Tibial artery (tissue), 4 donors: ENCODE measurements at regions of chr9 and their contacts with region 1.

Region 1: GRCh38 chr9:88593537-88594185 is 58.7 kb downstream of the NXNL2 start:
- DNase-seq: peak in 1 of 2 donors; percentile 54
- H3K4me3 ChIP-seq: no peak overlapping the region
- H3K27ac ChIP-seq: no peak overlapping the region
- H3K4me1 ChIP-seq: peaks cover 0 to 8% (median 0%) of the 10 kb centered on the region in 4 donors
- H3K27me3 ChIP-seq: no peaks in the 10 kb centered on the region
- CTCF ChIP-seq: peak; percentile 58 to 87

Region 2: DNA sequence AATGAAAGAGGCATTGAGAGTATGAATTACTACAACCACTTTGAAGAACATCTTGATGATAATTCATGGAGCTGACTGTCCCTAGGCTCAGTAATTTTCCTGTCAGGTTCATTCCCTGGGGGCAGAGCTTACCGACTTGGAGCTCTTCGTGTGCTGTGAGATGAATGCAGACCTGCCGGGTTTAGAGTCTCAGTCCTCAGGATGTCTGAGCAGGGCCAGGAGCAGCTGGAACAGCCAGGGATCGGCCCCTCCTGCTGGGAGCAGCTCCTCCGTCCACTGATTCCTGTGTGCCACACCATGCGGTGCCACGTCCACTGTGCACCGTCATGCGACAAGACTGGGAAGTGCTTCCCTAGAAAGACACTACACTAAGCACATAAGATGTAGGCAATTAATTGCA is 267.6 kb before region 1 on chr9:
- intact Hi-C with region 1: no loop called
- DNase-seq: no peak
- H3K4me3 ChIP-seq: no peak overlapping the region
- H3K27ac ChIP-seq: no peak overlapping the region
- H3K4me1 ChIP-seq: no peaks in the 10 kb centered on the region
- H3K27me3 ChIP-seq: peaks cover 0 to 6% of the 10 kb centered on the region in 2 donors
- CTCF ChIP-seq: no peak

Region 3: DNA sequence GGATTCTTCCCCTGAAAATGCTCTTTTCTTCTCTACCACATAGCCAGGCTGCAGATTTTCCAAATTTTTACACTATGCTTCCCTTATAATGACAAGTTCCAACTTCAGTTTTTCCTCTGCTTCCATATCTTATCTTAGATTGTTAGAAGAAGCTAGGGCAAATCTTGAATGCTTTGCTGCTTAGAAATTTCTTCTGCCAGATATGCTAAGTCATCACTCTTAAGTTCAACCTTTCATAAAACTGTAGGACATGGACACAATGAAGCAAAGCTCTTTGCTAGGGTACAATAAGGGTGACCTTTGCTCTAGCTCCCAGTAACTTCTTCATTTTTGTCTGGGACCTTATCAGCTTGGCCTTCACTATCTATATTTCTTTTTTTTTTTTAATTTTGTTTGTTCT is 30.0 kb after region 1 on chr9:
- intact Hi-C with region 1: no loop called
- DNase-seq: no peak
- H3K4me3 ChIP-seq: no peak overlapping the region
- H3K27ac ChIP-seq: no peak overlapping the region
- H3K4me1 ChIP-seq: peaks cover 0 to 17% (median 3%) of the 10 kb centered on the region in 4 donors
- H3K27me3 ChIP-seq: no peaks in the 10 kb centered on the region
- CTCF ChIP-seq: no peak

Region 4: GRCh38 chr9:88651682-88652633 is 58.3 kb after region 1 on chr9:
- intact Hi-C with region 1: loop called (anchors 10 kb)
- DNase-seq: peak; percentile 93 to 95
- H3K4me3 ChIP-seq: no peak overlapping the region
- H3K27ac ChIP-seq: peak overlapping the region; percentile 66 to 69
- H3K4me1 ChIP-seq: peaks cover 0 to 39% (median 20%) of the 10 kb centered on the region in 4 donors
- H3K27me3 ChIP-seq: no peaks in the 10 kb centered on the region
- CTCF ChIP-seq: peak; percentile 30 to 44

Region 5: GRCh38 chr9:88733651-88734421 is 140.2 kb after region 1 on chr9:
- intact Hi-C with region 1: loop called (anchors 5 kb)
- DNase-seq: peak; percentile 69 to 86
- H3K4me3 ChIP-seq: no peak overlapping the region
- H3K27ac ChIP-seq: peak overlapping the region; percentile 65 to 69
- H3K4me1 ChIP-seq: peaks cover 0 to 52% (median 25%) of the 10 kb centered on the region in 4 donors
- H3K27me3 ChIP-seq: no peaks in the 10 kb centered on the region
- CTCF ChIP-seq: no peak

Region 6: GRCh38 chr9:89000973-89001916 is 407.6 kb after region 1 on chr9:
- intact Hi-C with region 1: loop called (anchors 2 kb)
- DNase-seq: peak; percentile 91 to 94
- H3K4me3 ChIP-seq: no peak overlapping the region
- H3K27ac ChIP-seq: peak overlapping the region; percentile 75 to 92
- H3K4me1 ChIP-seq: peaks cover 8 to 55% (median 49%) of the 10 kb centered on the region in 4 donors
- H3K27me3 ChIP-seq: no peaks in the 10 kb centered on the region
- CTCF ChIP-seq: peak; percentile 75 to 86